ENCODE measurements at regions of chr7 and their contacts with region 1.

Region 1: DNA sequence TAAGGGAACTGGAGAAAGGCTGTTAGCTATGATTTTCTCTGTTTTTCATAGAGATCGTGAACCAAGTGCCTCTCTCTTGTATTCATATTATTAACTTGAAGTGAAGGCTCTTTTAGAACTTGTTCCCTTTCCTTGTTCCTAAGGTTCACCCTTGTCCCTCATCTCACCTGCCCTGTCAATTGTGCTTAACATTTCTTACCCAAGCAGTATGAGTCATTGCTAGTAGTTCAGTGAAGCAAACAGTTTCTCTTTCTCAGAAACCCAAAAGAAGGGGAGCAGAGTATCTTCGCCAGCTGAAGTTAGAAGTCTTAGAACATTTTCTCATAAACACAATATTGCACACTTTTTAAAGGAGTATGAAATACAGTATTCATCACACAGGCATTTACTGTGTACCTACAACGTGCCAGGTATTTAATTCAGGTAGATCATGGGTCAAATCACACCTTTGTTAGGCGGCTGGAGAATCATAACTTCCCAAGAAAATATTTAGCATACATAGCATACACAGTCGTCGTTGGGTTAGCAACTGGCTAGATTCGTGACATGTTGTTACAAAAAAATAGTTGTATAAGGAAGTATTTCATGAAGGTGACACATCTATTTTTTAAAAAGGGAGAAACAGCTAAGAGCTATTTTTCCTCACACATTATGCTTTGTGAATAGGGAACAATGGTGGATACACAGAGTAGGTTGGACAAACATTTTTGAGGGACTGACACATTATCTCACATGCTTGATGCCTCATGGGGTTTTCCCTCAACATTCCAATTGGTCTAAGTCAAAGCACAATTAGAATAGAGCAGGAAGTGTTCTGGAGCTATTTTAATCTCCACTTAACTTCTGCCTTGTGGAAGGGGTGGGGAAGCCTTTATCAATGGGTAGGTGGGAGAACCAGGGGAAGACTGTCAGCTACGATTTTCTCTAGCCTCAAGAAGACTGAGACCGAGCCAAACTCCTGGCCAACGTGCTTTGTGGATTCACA is 13.2 kb downstream of the HDAC9 start:
- DNase-seq: peak; percentile 75
- ATAC-seq: peak; percentile 79
- H3K4me3 ChIP-seq: peak overlapping the region in 4 of 5 experiments; percentile 13 to 65 (median 30)
- H3K4me3 Mint-ChIP-seq: peak overlapping the region; percentile 93
- H3K27ac ChIP-seq: peak overlapping the region; percentile 91 to 96
- H3K27ac Mint-ChIP-seq: peak overlapping the region; percentile 99
- H3K4me1 ChIP-seq: peaks cover 54 to 76% of the 10 kb centered on the region in 2 donors
- H3K4me1 Mint-ChIP-seq: peaks cover 77% of the 10 kb centered on the region
- H3K27me3 ChIP-seq: no peaks in the 10 kb centered on the region
- H3K27me3 Mint-ChIP-seq: no peaks in the 10 kb centered on the region
- CTCF ChIP-seq: no peak

Region 2: DNA sequence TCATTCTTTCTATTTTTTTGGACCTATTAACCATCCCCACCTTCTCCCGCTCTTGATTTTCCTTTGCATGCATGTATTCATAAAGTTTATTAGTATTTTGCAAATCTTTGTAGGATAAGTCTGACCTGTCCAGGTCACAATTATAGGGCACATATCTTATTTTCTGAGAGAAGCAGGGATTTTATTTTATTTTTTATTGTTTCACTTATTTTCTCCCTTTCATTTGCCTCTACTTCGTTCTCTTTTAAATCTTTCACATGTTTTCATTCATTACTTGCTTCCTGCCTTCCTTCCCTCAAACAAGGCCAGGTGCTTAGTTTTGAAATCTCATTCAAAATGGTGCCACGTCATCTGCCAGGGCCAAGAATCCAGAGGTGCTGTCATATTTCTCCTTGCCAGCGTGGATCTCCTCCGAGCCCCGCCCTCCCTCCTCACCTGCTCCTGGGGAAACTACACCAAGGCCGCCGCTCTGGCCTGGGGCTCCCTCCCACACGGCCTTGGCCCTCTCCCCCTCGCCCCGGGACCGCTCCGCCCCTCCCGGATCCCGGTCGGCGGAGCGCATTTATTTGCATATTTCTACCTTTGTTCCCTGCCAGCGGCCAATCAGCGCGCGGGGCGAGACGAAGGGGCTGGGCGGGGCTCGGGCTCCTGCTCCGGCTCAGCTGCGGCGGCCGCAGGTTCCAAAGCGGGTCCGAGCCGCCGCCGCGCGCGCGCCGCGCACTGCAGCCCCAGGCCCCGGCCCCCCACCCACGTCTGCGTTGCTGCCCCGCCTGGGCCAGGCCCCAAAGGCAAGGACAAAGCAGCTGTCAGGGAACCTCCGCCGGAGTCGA is 1755.4 kb before region 1 on chr7 and contains the start of gene TSPAN13:
- CTCF ChIA-PET with region 1: no interaction called
- POLR2A ChIA-PET with region 1: no interaction called
- intact Hi-C with region 1: loop called (anchors 10 kb)
- DNase-seq: peak; percentile 87
- ATAC-seq: peak; percentile 86
- H3K4me3 ChIP-seq: peak within 1 kb of the TSS; percentile 80 to 92 (median 86)
- H3K4me3 Mint-ChIP-seq: peak within 1 kb of the TSS; percentile 100
- H3K27ac ChIP-seq: peak within 1 kb of the TSS; percentile 58 to 71
- H3K27ac Mint-ChIP-seq: peak within 1 kb of the TSS; percentile 96
- H3K4me1 ChIP-seq: peaks cover 29% of the 10 kb centered on the region in 2 donors
- H3K4me1 Mint-ChIP-seq: peaks cover 36% of the 10 kb centered on the region
- H3K27me3 ChIP-seq: no peaks in the 10 kb centered on the region
- H3K27me3 Mint-ChIP-seq: no peaks in the 10 kb centered on the region
- CTCF ChIP-seq: no peak
- total RNA-seq, gene TSPAN13: 26.2 and 26.3 TPM in 2 replicates

Region 3: DNA sequence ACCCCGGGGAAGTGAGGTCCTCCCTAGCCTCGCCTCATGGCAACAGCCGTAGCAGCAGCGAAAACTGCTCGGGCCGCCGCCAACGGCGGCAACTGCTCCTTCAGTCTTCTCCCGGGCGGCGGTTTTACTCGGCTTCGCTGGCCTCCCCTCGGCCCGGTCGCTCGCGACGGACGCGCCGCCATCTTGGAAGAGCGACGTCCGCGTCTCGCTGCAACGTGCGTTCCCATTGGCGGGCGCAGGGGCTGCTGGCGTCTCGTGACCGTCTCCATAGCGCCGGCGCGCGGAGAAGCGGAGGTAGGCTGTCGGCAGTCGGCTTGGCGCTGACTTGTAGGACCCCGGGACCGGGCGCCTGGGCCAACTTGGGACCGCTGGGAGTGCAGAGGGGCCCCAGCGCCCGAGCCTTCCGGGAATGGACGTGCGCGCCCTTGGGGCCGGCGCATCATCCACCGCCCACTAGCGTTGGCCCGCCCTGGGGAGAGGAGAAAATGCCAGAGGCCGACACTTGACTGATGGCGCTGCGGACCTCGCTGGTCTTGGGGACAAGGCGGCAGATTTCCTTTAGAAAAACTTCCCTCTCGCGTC is 568.3 kb before region 1 on chr7 and contains the start of gene SNX13:
- CTCF ChIA-PET with region 1: no interaction called
- POLR2A ChIA-PET with region 1: interaction called, 4 read pairs
- intact Hi-C with region 1: loop called (anchors 5 kb)
- DNase-seq: peak; percentile 95
- ATAC-seq: peak; percentile 90
- H3K4me3 ChIP-seq: peak within 1 kb of the TSS; percentile 81 to 96 (median 95)
- H3K4me3 Mint-ChIP-seq: peak within 1 kb of the TSS; percentile 98
- H3K27ac ChIP-seq: peak within 1 kb of the TSS; percentile 97
- H3K27ac Mint-ChIP-seq: peak within 1 kb of the TSS; percentile 99
- H3K4me1 ChIP-seq: peaks cover 14 to 22% of the 10 kb centered on the region in 2 donors
- H3K4me1 Mint-ChIP-seq: peaks cover 38% of the 10 kb centered on the region
- H3K27me3 ChIP-seq: no peaks in the 10 kb centered on the region
- H3K27me3 Mint-ChIP-seq: no peaks in the 10 kb centered on the region
- CTCF ChIP-seq: no peak
- total RNA-seq, gene SNX13: 58.1 and 62.6 TPM in 2 replicates

Region 4: GRCh38 chr7:18455606-18456005 is 53.1 kb before region 1 on chr7:
- CTCF ChIA-PET with region 1: no interaction called
- POLR2A ChIA-PET with region 1: no interaction called
- intact Hi-C with region 1: no loop called
- DNase-seq: no peak
- ATAC-seq: no peak
- H3K4me3 ChIP-seq: no peak overlapping the region
- H3K4me3 Mint-ChIP-seq: no peak overlapping the region
- H3K27ac ChIP-seq: no peak overlapping the region
- H3K27ac Mint-ChIP-seq: no peak overlapping the region
- H3K4me1 ChIP-seq: peaks cover 9 to 15% of the 10 kb centered on the region in 2 donors
- H3K4me1 Mint-ChIP-seq: peaks cover 24% of the 10 kb centered on the region
- H3K27me3 ChIP-seq: no peaks in the 10 kb centered on the region
- H3K27me3 Mint-ChIP-seq: no peaks in the 10 kb centered on the region
- CTCF ChIP-seq: no peak

Region 5: DNA sequence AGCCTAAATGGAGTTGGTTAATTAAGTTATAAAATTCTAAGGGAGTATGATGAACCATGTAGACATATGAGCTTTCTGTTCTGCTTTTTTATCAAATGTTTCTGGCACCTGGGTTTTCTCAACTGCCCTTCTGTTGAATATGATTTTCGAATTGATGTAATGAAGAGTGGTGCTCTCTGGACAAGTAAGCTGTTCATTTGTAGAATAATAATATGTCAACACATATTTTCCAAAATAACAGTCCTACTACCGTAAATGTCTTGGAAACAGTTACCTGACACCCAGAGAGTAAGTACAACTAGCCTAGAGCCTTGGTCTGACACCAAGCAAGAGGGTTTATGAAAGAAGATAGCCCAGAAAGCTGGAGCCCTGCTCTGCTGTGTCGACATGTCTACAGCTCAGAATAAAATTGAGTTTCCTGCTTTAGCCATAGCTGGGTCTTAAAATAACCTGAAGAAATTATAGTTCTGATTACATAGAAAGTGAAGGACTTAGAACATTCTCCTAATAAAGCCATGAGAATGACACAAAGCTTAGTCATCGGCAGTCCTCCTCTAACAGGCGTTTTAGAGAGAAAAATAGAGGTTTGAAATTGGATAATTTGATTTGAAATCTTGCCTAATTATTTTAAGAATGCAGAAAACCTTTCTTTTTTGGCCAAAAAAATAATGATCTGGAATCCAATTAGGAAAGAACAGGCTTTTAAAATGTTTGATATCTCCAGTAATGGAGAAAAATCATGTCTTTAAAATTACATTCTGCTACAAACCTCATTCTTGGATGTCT is 11.9 kb after region 1 on chr7:
- CTCF ChIA-PET with region 1: interaction called, 31 read pairs
- POLR2A ChIA-PET with region 1: interaction called, 13 read pairs
- intact Hi-C with region 1: loop called (anchors 1 kb)
- DNase-seq: peak; percentile 74
- ATAC-seq: peak; percentile 80
- H3K4me3 ChIP-seq: peak overlapping the region in 4 of 5 experiments; percentile 8 to 66 (median 33)
- H3K4me3 Mint-ChIP-seq: peak overlapping the region; percentile 84
- H3K27ac ChIP-seq: peak overlapping the region; percentile 77 to 90
- H3K27ac Mint-ChIP-seq: peak overlapping the region; percentile 97
- H3K4me1 ChIP-seq: peaks cover 27 to 45% of the 10 kb centered on the region in 2 donors
- H3K4me1 Mint-ChIP-seq: peaks cover 74% of the 10 kb centered on the region
- H3K27me3 ChIP-seq: no peaks in the 10 kb centered on the region
- H3K27me3 Mint-ChIP-seq: no peaks in the 10 kb centered on the region
- CTCF ChIP-seq: no peak

Region 6: DNA sequence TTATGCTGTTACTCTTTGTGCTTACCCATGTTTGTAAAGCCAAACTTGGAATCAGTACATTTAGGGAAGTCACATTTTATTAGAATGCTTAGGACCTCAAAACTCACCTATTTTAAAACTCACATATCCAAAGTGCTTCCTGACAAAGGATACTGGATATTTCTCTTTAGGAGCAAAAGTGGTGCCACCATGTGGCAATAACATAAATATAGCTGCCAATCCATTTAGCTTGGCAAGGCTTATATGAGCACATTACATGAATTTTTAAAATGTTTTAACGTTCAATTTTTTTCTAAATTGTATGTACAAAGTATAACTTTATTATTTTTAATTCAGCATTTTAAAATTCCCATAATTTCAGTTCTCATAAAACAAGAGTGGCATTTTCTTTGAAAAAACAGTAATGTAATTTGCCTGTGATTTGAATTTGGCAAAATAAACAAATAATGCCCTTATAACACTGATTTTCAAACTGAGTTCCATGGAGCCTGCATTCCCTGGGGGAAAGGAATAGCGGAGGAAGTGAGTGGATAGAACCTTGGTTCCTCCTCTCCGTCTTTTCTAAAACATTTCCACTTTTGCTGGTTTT is 62.2 kb after region 1 on chr7:
- CTCF ChIA-PET with region 1: interaction called, 42 read pairs
- POLR2A ChIA-PET with region 1: interaction called, 5 read pairs
- intact Hi-C with region 1: loop called (anchors 1 kb)
- DNase-seq: no peak
- ATAC-seq: no peak
- H3K4me3 ChIP-seq: no peak overlapping the region
- H3K4me3 Mint-ChIP-seq: no peak overlapping the region
- H3K27ac ChIP-seq: peak overlapping the region in 1 of 2 donors; percentile 44
- H3K27ac Mint-ChIP-seq: peak overlapping the region; percentile 20
- H3K4me1 ChIP-seq: peaks cover 45 to 56% of the 10 kb centered on the region in 2 donors
- H3K4me1 Mint-ChIP-seq: peaks cover 62% of the 10 kb centered on the region
- H3K27me3 ChIP-seq: no peaks in the 10 kb centered on the region
- H3K27me3 Mint-ChIP-seq: no peaks in the 10 kb centered on the region
- CTCF ChIP-seq: no peak

Region 7: GRCh38 chr7:18715988-18716387 is 207.3 kb after region 1 on chr7:
- CTCF ChIA-PET with region 1: no interaction called
- POLR2A ChIA-PET with region 1: no interaction called
- intact Hi-C with region 1: no loop called
- DNase-seq: no peak
- ATAC-seq: no peak
- H3K4me3 ChIP-seq: no peak overlapping the region
- H3K4me3 Mint-ChIP-seq: no peak overlapping the region
- H3K27ac ChIP-seq: no peak overlapping the region
- H3K27ac Mint-ChIP-seq: no peak overlapping the region
- H3K4me1 ChIP-seq: no peaks in the 10 kb centered on the region
- H3K4me1 Mint-ChIP-seq: no peaks in the 10 kb centered on the region
- H3K27me3 ChIP-seq: no peaks in the 10 kb centered on the region
- H3K27me3 Mint-ChIP-seq: no peaks in the 10 kb centered on the region
- CTCF ChIP-seq: no peak

Measured in B cell (primary cell).